Prostate gland (tissue), 2 donors: ENCODE measurements at regions of chr22 and their contacts with region 1.

Region 1: GRCh38 chr22:36123673-36124630 is 36.6 kb downstream of the APOL3 start:
- DNase-seq: peak; percentile 95
- H3K4me3 ChIP-seq: no peak overlapping the region
- H3K27ac ChIP-seq: peak overlapping the region; percentile 83 to 87
- H3K4me1 ChIP-seq: no peaks in the 10 kb centered on the region
- H3K27me3 ChIP-seq: no peaks in the 10 kb centered on the region
- CTCF ChIP-seq: peak; percentile 95 to 100 (median 100)
- POLR2A ChIP-seq: peak; percentile 56

Region 2: DNA sequence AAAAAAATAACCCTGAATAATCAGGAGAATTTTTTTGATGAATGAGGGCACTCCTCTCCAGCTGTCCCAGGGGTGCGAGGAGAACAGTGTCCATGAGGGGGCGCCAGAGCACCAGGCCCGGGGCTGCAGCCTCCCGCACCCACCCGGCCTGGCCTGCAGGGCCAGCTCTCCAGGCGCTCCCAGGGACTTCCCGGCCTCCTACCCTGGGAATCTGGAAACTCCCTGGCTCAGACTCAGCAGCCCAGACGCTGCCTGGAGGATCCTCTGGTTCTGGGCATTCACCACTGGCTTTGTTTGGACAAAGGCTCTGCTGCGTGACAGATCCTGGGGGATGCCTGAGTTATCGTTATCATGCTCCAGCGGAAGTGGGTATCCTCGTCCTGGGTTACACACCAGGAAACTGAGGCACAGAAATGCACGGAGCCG is 693.0 kb before region 1 on chr22:
- intact Hi-C with region 1: loop called (anchors 10 kb)
- DNase-seq: peak; percentile 88
- H3K4me3 ChIP-seq: no peak overlapping the region
- H3K27ac ChIP-seq: peak overlapping the region; percentile 1 to 3
- H3K4me1 ChIP-seq: no peaks in the 10 kb centered on the region
- H3K27me3 ChIP-seq: no peaks in the 10 kb centered on the region
- CTCF ChIP-seq: peak; percentile 99 to 100 (median 99)
- POLR2A ChIP-seq: no peak

Region 3: DNA sequence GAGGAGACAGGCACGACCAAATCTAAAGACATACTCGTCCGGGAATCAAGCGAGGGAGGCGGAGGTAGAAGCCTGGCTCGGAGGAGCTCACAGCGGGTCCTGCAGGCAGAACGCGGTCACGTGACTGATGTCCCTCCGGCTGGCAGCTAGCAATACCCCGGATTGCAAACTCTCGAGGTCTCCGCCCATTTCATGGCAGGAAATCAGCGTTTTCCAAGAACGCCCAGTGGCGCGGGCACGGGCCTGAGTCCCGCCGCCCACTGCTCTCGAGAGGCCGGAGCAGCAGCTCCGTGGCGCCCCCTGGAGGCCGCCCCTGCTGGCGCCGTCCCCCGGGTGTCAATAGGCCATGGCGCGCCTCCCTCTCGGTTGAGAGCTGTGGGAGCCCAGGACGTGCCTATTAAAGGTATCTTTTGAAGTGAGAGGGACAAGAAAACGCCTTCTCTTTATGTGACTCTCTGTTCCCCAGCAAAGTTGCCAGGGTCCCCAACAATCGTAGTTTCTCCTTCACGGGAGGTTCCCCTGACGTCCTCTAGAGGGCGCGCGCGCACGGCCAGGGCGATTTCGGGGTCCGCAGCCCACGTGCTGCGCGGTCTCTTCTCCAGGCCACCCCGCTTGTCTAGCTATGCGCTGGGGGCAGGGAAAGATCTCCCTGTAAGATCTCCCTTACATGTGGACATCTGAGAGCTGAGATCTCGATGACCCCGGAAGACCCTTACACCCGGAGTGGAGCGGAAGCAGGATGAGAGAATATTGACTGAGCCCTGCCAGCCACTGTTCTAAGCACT is 58.0 kb before region 1 on chr22:
- intact Hi-C with region 1: loop called (anchors 1 kb)
- DNase-seq: peak; percentile 87
- H3K4me3 ChIP-seq: peak overlapping the region; percentile 38 to 42
- H3K27ac ChIP-seq: peak overlapping the region; percentile 75 to 92
- H3K4me1 ChIP-seq: no peaks in the 10 kb centered on the region
- H3K27me3 ChIP-seq: no peaks in the 10 kb centered on the region
- CTCF ChIP-seq: peak; percentile 99 to 100 (median 100)
- POLR2A ChIP-seq: peak; percentile 20

Region 4: GRCh38 chr22:36160499-36160942 is 36.6 kb after region 1 on chr22 and contains the start of gene APOL3:
- intact Hi-C with region 1: no loop called
- DNase-seq: peak; percentile 86
- H3K4me3 ChIP-seq: peak within 1 kb of the TSS; percentile 9 to 19
- H3K27ac ChIP-seq: peak within 1 kb of the TSS; percentile 73 to 86
- H3K4me1 ChIP-seq: peaks cover 5% of the 10 kb centered on the region
- H3K27me3 ChIP-seq: no peaks in the 10 kb centered on the region
- CTCF ChIP-seq: no peak
- POLR2A ChIP-seq: peak; percentile 69
- total RNA-seq, gene APOL3: 18.8 to 32.2 TPM

Region 5: GRCh38 chr22:36325154-36326031 is 201.4 kb after region 1 on chr22:
- intact Hi-C with region 1: no loop called
- DNase-seq: peak; percentile 95
- H3K4me3 ChIP-seq: no peak overlapping the region
- H3K27ac ChIP-seq: peak overlapping the region; percentile 94 to 96
- H3K4me1 ChIP-seq: peaks cover 74% of the 10 kb centered on the region
- H3K27me3 ChIP-seq: no peaks in the 10 kb centered on the region
- CTCF ChIP-seq: no peak
- POLR2A ChIP-seq: peak; percentile 65